Aorta (tissue), 5 donors: ENCODE measurements at regions of chr20 and their contacts with region 1.

Region 1: DNA sequence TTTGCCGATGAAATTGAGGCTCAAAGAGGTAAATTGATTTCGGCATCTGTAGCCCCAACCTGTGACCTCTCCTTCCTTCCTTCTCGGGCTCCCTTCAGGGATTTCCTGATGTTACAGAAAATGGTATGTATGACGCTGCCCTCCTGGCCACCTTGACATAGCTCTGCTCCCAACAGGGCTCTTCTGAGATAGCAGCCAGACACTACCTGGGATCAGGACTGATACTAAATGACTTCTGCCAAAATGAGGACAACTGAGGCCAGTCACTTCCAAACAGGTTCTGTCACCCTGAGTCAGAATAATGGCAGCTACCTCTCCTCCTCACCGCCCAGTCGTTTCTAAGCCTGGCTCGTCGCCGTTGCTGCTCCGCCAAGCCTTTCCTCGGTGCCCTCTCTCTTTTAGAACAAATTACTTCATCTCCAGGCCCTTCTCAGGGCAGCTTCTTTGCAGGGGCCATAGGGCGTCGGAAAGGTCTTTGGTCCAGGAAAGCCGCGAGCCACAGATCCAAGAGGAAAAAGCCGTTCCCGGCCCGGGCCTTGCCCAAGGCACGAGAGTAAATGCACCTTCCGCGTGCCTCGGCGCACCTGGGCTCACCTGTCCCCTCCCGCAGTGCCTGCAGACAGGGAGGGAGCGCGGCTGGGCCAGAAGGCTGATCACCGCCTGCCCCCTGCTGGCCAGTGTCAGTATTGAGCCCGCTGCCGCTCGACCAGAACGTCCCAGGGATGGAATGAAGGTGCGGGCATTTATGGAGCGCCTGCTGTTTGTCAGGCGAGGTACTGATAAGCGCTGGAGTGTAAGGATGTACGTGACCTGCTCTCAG is 904 bp upstream of the LPIN3 start:
- DNase-seq: peak; percentile 86 to 95
- ATAC-seq: peak; percentile 92
- H3K4me3 ChIP-seq: peak overlapping the region in 1 of 2 donors; percentile 10
- H3K27ac ChIP-seq: peak overlapping the region in 1 of 2 donors; percentile 55
- H3K4me1 ChIP-seq: no peaks in the 10 kb centered on the region
- H3K27me3 ChIP-seq: no peaks in the 10 kb centered on the region

Region 2: GRCh38 chr20:41232973-41233926 is 106.5 kb before region 1 on chr20:
- intact Hi-C with region 1: loop called in 1 of 2 experiments (anchors 5 kb)
- DNase-seq: no peak
- ATAC-seq: peak; percentile 54
- H3K4me3 ChIP-seq: no peak overlapping the region
- H3K27ac ChIP-seq: peak overlapping the region; percentile 63 to 99
- H3K4me1 ChIP-seq: peaks cover 0 to 13% of the 10 kb centered on the region in 2 donors
- H3K27me3 ChIP-seq: no peaks in the 10 kb centered on the region

Region 3: DNA sequence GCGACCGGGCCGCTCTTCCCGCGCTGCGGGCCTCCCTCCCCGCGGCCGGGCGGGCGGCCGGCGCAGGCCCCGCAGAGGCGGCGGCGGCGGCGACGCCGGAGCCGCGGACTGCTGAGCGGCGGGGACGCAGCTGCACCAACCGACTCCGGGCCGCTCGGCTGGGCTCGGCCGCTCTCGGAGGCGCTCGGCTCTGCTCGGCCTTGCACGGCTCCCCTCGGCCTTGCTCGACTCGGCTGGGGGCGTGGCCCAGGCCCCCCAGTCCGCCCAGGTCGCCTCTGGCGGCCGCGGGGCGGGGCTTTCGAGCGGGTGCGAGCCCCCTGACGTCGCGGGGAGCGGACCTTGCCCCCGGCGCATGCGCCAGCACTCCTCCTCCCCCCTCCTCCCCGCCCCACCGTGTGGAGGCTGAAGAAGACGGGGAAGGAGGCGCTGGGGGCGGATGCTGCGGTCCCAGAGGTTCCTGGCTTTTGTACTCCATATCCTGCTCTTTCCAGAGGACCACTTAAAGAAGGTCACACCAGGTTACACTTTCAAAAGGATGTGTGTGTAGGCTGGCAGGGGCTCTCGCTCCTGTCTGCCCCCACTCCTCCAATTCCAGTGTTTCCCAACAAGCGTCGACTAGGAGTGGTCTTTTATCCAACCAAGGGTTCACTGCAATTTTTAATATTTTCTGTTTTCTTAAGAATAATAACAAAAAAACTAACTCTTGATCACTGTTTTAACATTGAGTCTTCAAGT is 22.0 kb before region 1 on chr20 and contains the start of gene ZHX3:
- intact Hi-C with region 1: loop called in 1 of 2 experiments (anchors 2 kb)
- DNase-seq: peak; percentile 98 to 99
- ATAC-seq: peak; percentile 98
- H3K4me3 ChIP-seq: peak within 1 kb of the TSS; percentile 83 to 96
- H3K27ac ChIP-seq: peak within 1 kb of the TSS; percentile 53 to 99
- H3K4me1 ChIP-seq: peaks cover 3% of the 10 kb centered on the region in 2 donors
- H3K27me3 ChIP-seq: no peaks in the 10 kb centered on the region
- total RNA-seq, gene ZHX3: 50.7 to 98.6 TPM

Region 4: DNA sequence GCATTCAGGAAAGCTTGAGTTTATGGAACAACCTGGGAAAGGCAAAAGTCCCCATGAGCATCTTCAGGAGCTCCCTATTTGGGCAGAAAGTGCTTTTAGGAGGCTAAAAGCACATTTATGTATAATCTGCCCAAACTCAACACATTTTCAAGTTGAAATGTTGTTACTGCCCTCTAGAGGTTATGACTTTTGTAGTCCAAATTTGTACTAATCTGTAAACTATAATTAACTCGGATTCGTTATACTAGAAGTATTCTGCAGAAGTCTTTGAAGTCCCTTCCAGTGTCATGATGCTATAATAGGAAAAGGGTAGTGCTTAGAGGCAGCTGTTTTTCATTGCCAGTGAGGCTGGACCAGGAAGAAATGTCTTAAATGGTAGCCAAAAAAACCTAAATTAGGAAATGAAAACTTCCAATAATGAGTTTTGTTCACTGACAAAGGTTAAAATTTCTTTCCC is 71.7 kb after region 1 on chr20:
- intact Hi-C with region 1: loop called in 1 of 2 experiments (anchors 5 kb)
- DNase-seq: no peak
- ATAC-seq: peak; percentile 65
- H3K4me3 ChIP-seq: no peak overlapping the region
- H3K27ac ChIP-seq: peak overlapping the region in 1 of 2 donors; percentile 91
- H3K4me1 ChIP-seq: no peaks in the 10 kb centered on the region
- H3K27me3 ChIP-seq: no peaks in the 10 kb centered on the region